Prostate gland (tissue), 2 donors: ENCODE measurements at regions of chr1 and their contacts with region 1.

Region 1: DNA sequence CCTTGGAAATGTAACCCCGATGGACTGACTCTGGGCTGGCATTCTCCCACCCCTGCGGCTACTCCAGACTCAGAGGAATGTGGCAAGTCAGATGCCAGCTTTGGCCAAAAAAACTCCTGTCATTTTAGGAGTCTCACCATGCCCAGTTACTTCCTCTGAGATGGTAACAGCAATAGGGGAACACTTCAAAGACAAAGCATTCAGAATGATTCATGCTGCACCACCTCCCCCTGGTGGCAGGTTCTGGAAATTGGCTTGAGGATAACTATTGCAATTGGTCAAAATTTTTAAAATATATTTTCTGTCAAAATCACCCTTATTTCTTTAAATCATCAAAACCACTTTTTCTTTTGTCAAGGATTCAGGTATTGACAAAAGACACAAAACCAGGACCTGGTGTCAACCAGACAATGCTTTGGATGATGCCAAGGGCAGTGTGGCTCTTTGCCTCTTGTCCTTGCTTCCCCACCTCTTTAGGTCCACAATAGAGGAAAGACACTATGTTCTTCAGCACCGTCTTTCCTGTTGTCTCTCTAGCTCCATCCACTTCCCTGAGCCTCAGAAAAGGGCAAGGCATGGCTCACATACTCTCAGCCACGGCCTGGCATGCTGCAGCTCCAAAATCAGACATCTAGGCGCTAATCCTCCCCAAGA is 9.9 kb upstream of the CDCA8 start:
- DNase-seq: peak; percentile 56
- H3K4me3 ChIP-seq: no peak overlapping the region
- H3K27ac ChIP-seq: no peak overlapping the region
- H3K4me1 ChIP-seq: no peaks in the 10 kb centered on the region
- H3K27me3 ChIP-seq: no peaks in the 10 kb centered on the region
- CTCF ChIP-seq: peak; percentile 81 to 89 (median 84)
- POLR2A ChIP-seq: no peak

Region 2: DNA sequence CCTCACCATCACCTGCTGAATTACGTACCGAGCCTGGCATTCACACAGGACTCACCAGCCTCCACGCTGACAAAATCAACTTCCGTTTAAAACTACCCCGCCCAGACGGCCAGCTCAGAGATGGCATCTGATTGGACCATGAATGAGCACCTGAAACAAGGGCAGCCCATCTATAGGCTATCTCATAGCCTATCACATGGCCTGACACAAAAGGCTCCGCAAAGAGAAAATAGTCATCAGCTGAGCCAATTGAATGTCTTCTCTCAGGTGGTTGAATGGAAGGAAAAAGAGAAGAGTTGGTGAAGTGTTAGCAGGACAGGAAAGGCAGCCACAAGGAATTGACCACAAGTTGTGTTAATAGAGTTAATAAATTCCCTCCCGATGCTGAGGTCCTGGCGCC is 258.7 kb before region 1 on chr1:
- intact Hi-C with region 1: no loop called
- DNase-seq: no peak
- H3K4me3 ChIP-seq: no peak overlapping the region
- H3K27ac ChIP-seq: no peak overlapping the region
- H3K4me1 ChIP-seq: no peaks in the 10 kb centered on the region
- H3K27me3 ChIP-seq: peaks cover 5% of the 10 kb centered on the region
- CTCF ChIP-seq: no peak
- POLR2A ChIP-seq: no peak

Region 3: DNA sequence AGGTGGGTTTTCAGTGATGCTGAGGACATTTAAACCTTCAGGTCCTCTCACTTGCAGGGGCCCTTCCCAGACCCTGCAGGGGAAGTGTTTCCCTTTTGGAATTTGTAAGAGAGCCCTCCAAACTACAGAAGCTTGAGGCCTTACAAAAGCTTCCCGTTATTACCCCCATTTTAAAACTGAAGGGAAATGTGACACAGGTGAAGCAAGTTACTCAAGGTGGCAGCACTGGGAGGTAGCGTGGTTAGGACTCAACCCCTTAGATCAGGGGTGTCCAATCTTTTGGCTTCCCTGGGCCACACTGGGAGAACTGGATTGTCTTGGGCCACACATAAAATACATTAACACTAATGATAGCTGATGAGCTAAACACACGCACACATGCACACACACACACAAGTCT is 223.9 kb before region 1 on chr1:
- intact Hi-C with region 1: loop called (anchors 5 kb)
- DNase-seq: no peak
- H3K4me3 ChIP-seq: no peak overlapping the region
- H3K27ac ChIP-seq: peak overlapping the region; percentile 19 to 20
- H3K4me1 ChIP-seq: peaks cover 2% of the 10 kb centered on the region
- H3K27me3 ChIP-seq: no peaks in the 10 kb centered on the region
- CTCF ChIP-seq: peak in 1 of 4 experiments; percentile 57
- POLR2A ChIP-seq: no peak

Region 4: DNA sequence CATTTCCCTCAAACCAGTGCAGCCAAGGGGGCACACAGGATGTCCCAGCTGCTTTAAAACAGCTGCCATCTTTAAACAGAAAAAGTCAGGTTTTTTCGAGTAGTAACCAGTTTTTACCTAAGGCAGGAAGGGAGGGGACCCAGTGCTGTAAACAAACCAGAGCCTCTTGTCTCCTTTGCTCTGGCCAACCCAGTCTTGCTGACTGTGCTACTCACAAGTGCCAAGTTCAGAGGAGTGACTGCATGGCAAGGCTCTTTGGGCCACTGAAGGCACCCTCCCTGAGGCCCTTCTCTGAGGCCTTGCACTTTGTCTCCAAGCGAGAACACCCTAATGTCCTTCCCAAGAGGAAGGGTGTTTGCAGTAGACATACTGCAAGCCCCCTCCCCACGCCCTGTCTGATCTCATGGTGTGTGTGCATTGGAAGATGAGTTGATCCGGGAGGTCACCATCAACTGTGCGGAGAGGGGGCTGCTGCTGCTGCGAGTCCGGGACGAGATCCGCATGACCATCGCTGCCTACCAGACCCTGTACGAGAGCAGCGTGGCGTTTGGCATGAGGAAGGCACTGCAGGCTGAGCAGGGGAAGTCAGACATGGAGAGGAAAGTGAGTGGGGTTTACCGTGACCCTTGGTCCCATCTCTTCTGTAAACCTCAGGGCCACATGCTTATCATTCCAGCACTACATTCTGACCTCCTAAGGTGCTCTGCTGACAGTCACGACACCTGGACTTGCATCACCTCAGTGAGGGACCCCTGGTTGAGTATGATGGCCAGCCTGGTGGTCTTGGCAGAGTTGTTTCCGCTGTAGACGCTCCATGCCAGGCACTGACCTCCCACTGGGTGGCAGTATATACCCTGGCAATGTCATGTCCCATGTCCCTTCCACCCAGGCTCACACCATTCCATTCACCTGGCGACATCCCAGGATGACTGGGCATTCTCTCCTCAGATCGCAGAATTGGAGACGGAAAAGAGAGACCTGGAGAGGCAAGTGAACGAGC is 121.0 kb before region 1 on chr1:
- intact Hi-C with region 1: loop called (anchors 2 kb)
- DNase-seq: no peak
- H3K4me3 ChIP-seq: no peak overlapping the region
- H3K27ac ChIP-seq: no peak overlapping the region
- H3K4me1 ChIP-seq: no peaks in the 10 kb centered on the region
- H3K27me3 ChIP-seq: no peaks in the 10 kb centered on the region
- CTCF ChIP-seq: no peak
- POLR2A ChIP-seq: no peak

Region 5: DNA sequence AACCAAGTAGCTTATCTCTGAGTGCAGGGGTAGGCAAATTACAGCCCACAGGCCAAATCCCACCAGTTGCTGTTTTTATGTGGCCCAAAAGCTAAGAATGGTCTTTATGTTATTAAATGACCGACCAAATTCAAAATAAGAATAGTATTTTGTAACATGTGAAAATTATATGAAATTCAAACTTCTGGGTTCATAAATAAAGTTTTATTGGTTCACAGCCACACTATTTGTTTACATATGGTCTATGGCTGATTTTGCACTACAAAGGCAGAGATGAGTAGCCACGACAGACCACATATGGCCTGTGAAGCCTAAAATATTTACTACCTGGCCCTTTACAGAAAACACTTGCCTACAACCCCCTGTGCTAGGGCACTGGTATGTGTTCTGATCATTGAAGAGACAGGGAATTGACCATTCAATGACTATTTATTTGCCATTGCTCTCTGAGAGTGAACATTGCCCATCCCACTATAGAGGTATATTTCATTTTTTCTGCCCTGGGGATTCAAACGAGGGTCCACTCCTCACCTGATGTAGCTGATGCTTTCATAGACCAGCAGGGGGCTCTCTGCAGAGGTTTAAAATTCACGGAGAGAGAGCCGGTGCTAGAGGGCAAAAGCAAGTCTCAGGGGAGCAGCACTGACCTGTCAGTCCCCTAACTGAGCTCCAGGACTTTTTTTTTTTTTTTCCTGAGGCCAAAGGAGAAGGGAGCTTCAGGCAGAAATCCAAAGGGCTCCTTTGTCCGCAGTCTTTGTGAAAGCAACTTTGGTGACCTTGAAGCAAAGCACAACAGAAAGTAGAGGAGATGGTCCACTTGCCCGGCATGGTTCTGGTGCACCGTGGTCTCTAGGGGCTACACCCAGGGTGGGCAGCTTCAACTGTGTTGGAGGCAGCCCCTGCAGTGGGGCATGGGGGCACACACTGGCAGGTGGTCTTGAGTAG is 79.4 kb before region 1 on chr1:
- intact Hi-C with region 1: loop called (anchors 2 kb)
- DNase-seq: no peak
- H3K4me3 ChIP-seq: no peak overlapping the region
- H3K27ac ChIP-seq: no peak overlapping the region
- H3K4me1 ChIP-seq: no peaks in the 10 kb centered on the region
- H3K27me3 ChIP-seq: no peaks in the 10 kb centered on the region
- CTCF ChIP-seq: peak in 3 of 4 experiments; percentile 12 to 50 (median 44)
- POLR2A ChIP-seq: no peak